ENCODE measurements at regions of chr18 and their contacts with region 1.

Region 1: DNA sequence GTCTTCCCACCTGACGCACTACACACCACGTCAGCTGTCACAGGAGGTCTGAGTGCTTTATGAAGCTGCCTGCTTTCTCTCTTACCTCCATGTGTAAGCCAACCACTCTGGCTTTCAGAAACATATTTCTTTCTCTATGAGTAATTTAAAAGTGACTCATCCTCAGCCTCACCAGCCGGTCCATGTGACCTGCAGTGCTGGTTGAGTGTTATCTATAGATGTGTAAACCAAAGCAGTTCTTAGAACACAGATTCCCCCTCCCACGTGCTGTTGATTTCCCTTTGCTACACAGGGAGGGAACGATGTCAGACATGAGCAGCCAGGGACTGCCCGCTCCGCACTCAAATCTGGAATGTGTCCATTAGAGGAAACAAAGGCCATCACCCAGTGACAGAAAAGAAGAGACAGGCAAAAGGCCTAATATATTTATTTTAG is 157.8 kb downstream of the BCL2 start:
- DNase-seq: peak; percentile 42 to 91 (median 77)
- ATAC-seq: peak; percentile 82
- H3K4me3 Mint-ChIP-seq: peak overlapping the region; percentile 64 to 94 (median 84)
- H3K27ac Mint-ChIP-seq: peak overlapping the region; percentile 95 to 100 (median 98)
- H3K4me1 Mint-ChIP-seq: peaks cover 58 to 96% (median 93%) of the 10 kb centered on the region in 4 donors
- H3K27me3 Mint-ChIP-seq: no peaks in the 10 kb centered on the region

Region 2: DNA sequence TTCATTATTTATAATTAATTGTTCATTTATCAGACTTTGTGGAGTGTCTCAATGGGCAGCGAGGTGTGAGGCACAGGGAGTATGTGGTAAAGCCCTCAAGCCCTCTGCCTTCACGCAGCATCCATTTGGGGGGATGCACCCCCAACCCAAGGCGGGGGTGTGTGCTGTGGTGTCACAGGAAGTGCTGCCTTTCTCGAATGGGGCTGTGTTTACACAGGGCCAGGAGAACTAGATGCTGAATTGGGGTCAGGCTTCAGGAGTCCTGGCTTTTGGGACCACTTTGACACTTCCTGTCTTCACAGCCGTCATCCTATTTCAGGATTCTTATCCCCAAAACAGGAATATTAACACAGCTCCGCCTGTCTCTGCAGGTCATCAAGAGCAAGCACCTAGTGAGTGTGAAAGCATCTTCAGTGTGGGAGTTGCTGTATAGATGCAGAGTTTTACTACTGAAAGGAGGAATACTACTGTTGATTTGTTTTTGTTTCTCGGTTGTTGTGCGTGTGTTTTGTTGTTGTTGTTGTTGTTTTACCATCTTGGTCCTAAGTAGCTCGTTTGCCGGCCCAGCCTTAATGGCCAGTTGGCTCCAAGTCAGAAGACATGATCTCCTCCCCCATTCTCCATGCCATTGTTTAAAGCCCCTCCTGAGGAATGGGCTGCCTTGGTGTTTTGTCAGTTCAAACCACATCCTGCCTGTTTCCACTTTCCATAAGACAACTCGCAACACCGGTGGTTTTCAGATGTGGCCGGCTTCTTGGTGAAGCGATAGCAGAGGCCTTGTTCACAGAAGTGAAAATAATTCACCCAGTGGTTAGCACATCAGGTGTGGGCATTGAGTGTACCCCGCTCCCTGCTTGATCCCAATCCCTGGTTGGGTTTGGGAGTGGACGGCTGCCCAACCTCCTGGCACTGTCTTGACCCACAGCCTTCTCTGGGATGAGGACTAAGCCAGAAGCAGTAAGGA is 63.5 kb before region 1 on chr18:
- POLR2A ChIA-PET with region 1: no interaction called
- DNase-seq: peak in 7 of 10 donors; percentile 18 to 72 (median 54)
- ATAC-seq: peak; percentile 75 to 84
- H3K4me3 Mint-ChIP-seq: peak overlapping the region; percentile 32 to 80 (median 67)
- H3K27ac Mint-ChIP-seq: peak overlapping the region; percentile 16 to 88 (median 82)
- H3K4me1 Mint-ChIP-seq: peaks cover 36 to 50% (median 45%) of the 10 kb centered on the region in 4 donors
- H3K27me3 Mint-ChIP-seq: peaks cover 0 to 5% (median 0%) of the 10 kb centered on the region in 5 donors

Region 3: DNA sequence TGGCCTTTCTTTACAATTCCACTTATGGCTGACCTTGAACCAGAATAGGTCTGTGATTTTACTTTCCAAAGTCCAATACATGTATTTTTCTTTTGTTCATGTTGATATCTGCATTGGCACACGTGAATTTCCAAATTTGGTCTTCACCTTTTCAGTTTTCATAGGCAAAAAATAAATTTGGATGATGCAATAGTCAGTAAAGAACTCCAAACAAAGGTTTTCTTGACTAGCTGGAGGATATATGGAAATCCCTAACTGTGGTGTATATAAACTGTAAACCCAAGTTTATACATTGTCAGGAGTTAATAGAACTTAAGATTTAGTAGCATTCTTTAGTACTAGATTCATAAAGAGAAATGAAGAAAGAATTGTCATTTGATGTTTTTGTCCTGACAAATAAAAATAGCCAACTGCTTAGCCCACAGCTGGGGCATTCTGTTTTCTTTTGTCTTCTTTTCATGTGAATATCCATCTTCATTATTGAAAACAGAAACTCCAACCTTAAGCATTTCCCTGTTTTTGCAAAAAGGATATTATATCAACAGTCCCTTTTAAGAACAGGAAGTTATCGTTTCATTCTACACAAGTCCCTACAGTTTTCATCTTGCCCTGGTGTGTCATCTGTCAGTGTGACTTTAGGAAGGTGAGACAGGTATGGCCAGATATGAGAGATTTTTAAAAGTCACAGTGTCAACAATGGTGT is 24.9 kb after region 1 on chr18:
- POLR2A ChIA-PET with region 1: no interaction called
- DNase-seq: no peak
- ATAC-seq: peak; percentile 54 to 57
- H3K4me3 Mint-ChIP-seq: peak overlapping the region in 5 of 10 donors; percentile 1 to 51 (median 9)
- H3K27ac Mint-ChIP-seq: peak overlapping the region; percentile 3 to 79 (median 53)
- H3K4me1 Mint-ChIP-seq: peaks cover 35 to 84% (median 79%) of the 10 kb centered on the region in 4 donors
- H3K27me3 Mint-ChIP-seq: no peaks in the 10 kb centered on the region

Region 4: GRCh38 chr18:63197224-63197869 is 35.6 kb after region 1 on chr18:
- POLR2A ChIA-PET with region 1: interaction called, 17 read pairs
- DNase-seq: peak in 4 of 10 donors; percentile 22 to 47 (median 36)
- ATAC-seq: peak; percentile 48 to 52
- H3K4me3 Mint-ChIP-seq: no peak overlapping the region
- H3K27ac Mint-ChIP-seq: no peak overlapping the region
- H3K4me1 Mint-ChIP-seq: peaks cover 12 to 43% (median 21%) of the 10 kb centered on the region in 4 donors
- H3K27me3 Mint-ChIP-seq: no peaks in the 10 kb centered on the region

Region 5: DNA sequence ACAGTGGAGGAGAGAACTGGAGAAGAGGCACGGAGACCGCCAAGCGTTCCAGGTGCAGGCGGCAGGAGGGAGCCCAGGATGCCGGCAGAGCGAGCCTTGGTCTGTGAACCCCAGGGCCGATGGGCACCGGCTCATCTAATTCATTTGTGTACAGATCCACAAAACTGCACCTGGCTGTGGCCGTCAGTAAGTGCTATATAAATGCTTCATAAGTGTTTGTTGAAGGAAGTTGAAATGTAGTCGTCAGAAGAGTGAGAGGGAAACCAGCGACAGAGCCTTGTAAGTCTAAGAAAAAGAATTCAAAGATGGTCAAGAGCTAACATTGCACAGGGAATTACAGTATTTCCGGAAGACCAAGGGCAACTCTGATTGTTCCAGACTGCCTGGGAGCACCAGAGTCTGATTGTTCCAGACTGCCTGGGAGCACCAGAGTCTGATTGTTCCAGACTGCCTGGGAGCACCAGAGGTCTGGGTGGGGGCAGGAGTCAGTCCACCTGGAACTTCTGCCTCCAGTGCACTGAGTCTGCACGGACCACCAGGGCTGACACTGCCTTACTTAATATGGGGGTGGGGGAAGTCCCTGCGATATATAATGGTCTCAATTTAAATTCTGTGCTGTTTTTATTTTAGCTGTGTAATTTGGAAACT is 45.5 kb after region 1 on chr18:
- POLR2A ChIA-PET with region 1: interaction called, 16 read pairs
- DNase-seq: peak in 2 of 10 donors; percentile 26 to 33
- ATAC-seq: peak; percentile 46 to 64
- H3K4me3 Mint-ChIP-seq: peak overlapping the region; percentile 71 to 92 (median 78)
- H3K27ac Mint-ChIP-seq: peak overlapping the region; percentile 81 to 98 (median 92)
- H3K4me1 Mint-ChIP-seq: peaks cover 65 to 98% (median 96%) of the 10 kb centered on the region in 4 donors
- H3K27me3 Mint-ChIP-seq: no peaks in the 10 kb centered on the region

Region 6: DNA sequence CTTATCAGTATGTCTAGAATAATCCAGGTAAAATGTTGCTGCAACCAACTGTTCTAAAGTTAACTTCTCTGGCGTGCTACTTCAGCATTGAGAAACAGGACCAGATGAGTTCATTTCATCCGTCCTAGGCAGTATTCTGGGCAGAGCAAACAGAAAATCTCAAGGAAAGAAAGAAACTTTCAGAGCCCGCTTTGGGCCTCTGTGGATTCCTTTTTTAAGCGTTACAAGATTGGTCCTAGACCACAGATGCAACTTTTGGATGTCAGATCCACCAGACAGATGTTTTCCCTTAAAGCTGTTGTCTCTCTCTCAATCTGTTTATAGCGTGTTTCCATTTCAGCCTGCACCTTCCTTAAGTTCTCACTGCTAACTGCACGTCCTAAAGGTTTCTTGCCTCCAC is 82.8 kb after region 1 on chr18:
- POLR2A ChIA-PET with region 1: no interaction called
- DNase-seq: no peak
- ATAC-seq: no peak
- H3K4me3 Mint-ChIP-seq: no peak overlapping the region
- H3K27ac Mint-ChIP-seq: peak overlapping the region in 5 of 10 donors; percentile 26 to 90 (median 55)
- H3K4me1 Mint-ChIP-seq: peaks cover 28 to 71% (median 63%) of the 10 kb centered on the region in 4 donors
- H3K27me3 Mint-ChIP-seq: no peaks in the 10 kb centered on the region

Region 7: GRCh38 chr18:63410792-63411191 is 249.0 kb after region 1 on chr18:
- POLR2A ChIA-PET with region 1: no interaction called
- DNase-seq: no peak
- ATAC-seq: no peak
- H3K4me3 Mint-ChIP-seq: no peak overlapping the region
- H3K27ac Mint-ChIP-seq: peak overlapping the region in 4 of 10 donors; percentile 43 to 85 (median 62)
- H3K4me1 Mint-ChIP-seq: peaks cover 17 to 51% (median 45%) of the 10 kb centered on the region in 4 donors
- H3K27me3 Mint-ChIP-seq: no peaks in the 10 kb centered on the region

Measured in naive thymus-derived CD8-positive, alpha-beta T cell (primary cell).